ENCODE measurements at regions of chr7 and their contacts with region 1.

Region 1: DNA sequence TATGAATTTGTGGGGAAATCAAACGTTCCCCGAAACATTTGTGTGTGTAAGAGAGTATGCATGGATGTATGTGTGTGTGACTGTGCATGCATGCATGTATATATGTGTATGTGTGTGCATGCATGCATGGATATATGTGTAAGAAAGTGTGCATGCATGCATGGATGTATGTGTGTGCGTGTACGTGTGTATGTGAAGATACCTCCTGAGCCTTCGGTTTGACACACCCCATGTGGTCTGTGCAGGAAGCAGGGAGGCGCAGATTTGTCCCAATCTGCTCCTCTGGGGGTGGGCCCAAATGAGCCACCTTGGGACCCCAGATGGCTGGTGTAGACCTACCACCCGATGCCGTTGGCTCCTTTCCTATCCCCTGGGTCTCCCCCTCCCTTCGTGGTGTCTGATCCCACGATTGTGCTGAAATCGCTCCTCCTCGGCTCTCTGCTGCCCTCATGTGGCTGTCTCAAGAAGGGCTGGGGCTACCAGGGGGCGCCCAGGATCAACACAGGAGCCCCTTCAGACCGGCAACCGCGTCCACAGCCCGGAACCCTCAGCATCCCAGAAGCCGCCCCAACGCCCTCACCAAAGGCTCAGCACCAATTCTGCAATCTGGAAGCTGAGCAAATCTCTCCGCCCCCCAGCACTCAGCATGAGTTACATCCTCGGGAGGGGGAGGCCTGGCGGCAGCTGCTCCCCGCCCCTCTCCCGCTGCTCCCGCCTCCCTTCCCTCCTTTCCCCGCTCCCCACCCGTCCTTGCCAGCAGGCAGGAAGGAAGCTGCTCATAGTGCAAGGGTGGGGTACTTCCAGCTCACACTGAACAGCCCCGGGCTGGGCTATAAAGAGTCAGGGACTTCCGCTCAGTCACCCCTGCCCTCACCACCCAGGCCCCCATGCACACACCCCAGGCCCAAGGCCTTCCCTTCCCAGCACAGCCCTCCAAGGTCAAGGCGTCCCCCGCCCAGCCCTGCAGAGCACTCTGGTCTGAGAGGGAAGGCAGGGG is 2.3 kb upstream of the NOS3 start:
- DNase-seq: peak; percentile 87
- H3K4me3 ChIP-seq: no peak overlapping the region
- H3K27ac ChIP-seq: peak overlapping the region; percentile 52
- H3K4me1 ChIP-seq: peaks cover 26% of the 10 kb centered on the region
- H3K27me3 ChIP-seq: peaks cover 0 to 1% of the 10 kb centered on the region in 2 experiments
- CTCF ChIP-seq: peak; percentile 93 to 96
- POLR2A ChIP-seq: peak; percentile 47

Region 2: GRCh38 chr7:150567169-150567568 is 421.4 kb before region 1 on chr7 and contains the start of gene GIMAP4:
- CTCF ChIA-PET with region 1: no interaction called
- POLR2A ChIA-PET with region 1: no interaction called
- dilution Hi-C with region 1: no loop called
- intact Hi-C with region 1: loop called (anchors 10 kb)
- DNase-seq: peak; percentile 69
- H3K4me3 ChIP-seq: peak within 1 kb of the TSS; percentile 78 to 80 (median 79)
- H3K27ac ChIP-seq: peak within 1 kb of the TSS; percentile 63
- H3K4me1 ChIP-seq: peaks cover 62% of the 10 kb centered on the region
- H3K27me3 ChIP-seq: no peaks in the 10 kb centered on the region
- CTCF ChIP-seq: no peak
- POLR2A ChIP-seq: peak; percentile 49
- total RNA-seq, gene GIMAP4: 168 and 174 TPM in 2 replicates

Region 3: DNA sequence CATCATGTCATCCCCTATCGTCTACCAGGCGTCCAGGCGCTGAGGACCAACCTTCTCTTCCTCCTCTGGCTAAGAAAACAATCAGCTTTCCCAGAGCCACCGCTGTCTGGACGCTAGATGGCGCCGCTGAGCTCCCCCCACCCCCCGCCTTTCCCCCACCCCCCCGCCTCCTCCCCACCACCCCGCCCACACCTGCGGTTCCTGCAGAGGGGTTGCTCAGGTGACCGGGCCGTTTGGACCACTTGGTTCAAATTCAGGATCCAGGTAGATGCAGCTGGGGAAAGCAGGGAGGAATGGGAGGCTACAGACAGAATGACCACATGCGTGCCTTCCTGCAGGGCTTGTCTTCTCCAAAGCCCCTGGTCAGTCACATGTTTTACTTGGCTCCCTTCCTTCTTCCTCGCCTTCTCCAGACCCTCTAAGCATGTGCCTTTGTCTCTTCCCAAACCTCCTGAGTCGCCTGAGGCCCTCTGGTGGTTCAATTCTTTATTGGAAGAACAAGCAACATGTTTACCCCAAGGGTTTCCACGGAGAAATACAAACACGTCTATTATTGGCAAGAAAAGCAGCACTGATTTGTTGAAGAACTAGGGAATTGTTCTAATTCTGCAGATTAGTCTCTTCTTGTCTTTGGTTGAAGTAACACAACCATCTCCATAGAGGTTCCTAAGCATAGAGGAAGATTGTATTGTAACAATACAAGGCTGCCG is 111.6 kb before region 1 on chr7:
- CTCF ChIA-PET with region 1: interaction called, 6 read pairs
- POLR2A ChIA-PET with region 1: no interaction called
- dilution Hi-C with region 1: no loop called
- intact Hi-C with region 1: loop called (anchors 5 kb)
- DNase-seq: peak; percentile 89
- H3K4me3 ChIP-seq: no peak overlapping the region
- H3K27ac ChIP-seq: no peak overlapping the region
- H3K4me1 ChIP-seq: peaks cover 10% of the 10 kb centered on the region
- H3K27me3 ChIP-seq: peaks cover 8 to 50% of the 10 kb centered on the region in 2 experiments
- CTCF ChIP-seq: peak; percentile 46 to 63
- POLR2A ChIP-seq: no peak

Region 4: DNA sequence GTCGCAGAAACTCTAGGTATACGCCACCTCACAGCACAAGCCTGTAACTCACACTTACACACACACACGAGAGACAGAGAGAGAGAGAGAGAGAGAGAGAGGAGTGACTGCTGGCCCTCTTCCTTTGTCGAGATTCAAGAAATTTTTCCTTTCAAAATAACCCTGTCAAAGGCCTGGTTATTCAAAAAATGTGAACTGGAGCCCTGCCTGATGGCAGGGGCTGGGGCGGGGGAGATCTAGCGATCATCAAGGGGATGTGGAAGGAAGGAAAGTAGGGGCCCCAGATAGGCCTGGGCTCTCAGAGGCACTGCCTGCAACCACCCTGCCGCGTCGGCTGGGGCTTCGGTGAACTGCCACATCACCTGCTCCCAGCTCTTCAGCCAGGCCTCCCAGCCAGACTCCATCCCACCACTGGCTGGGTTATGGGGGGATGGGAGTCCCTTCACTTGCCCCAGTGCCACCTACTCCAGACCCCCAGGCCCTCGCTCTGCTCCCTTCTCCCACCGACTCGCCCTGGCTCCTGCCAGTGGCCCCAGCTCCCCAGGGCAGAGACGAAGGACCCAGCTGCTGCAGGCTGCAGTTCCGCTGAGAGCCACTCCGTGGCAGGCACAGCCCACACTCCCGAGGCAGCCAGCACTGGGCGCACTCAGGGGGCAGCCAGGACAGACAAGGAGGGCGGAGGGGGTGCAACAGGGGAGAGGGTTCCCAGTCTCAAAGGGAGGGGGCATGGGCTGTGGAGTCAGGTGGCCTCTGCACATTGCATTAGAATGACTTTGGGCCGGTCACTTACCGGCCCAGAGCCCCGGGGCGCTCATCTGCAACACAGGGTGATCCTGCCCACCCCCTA is 25.8 kb before region 1 on chr7:
- CTCF ChIA-PET with region 1: interaction called, 54 read pairs
- POLR2A ChIA-PET with region 1: no interaction called
- dilution Hi-C with region 1: no loop called
- intact Hi-C with region 1: loop called (anchors 1 kb)
- DNase-seq: peak; percentile 36
- H3K4me3 ChIP-seq: no peak overlapping the region
- H3K27ac ChIP-seq: no peak overlapping the region
- H3K4me1 ChIP-seq: no peaks in the 10 kb centered on the region
- H3K27me3 ChIP-seq: peaks cover 17 to 23% of the 10 kb centered on the region in 2 experiments
- CTCF ChIP-seq: peak; percentile 81 to 96
- POLR2A ChIP-seq: no peak

Region 5: DNA sequence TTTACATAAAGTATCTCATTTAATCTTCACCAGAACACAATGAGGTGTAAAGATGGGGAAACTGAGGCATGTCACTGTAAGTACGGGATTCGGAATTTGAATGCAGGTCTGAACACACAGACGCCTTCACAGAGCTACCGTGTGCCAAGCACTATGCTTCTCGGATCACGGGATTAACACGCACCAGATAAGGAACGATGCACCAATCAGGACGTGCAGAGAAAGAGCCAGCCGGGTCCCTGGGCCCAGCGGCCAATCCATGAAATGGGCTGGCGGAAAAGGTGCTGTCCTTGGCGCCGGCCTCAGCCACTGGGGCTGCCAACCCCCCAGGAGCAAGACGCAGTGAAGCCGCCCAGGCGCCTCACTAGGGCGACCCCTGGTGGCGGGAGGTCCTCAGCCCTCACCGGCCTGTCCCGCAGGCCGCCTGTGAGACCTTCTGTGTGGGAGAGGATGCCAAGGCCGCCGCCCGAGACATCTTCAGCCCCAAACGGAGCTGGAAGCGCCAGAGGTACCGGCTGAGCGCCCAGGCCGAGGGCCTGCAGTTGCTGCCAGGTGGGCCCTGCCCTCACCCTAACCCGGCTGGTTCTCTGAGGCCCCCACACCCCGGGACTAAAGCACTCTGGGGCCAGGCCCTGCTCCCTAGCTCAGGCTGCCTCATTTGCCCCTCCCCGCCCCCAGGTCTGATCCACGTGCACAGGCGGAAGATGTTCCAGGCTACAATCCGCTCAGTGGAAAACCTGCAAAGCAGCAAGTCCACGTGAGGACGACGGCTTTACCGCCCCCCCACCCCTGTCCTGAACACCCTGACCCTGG is 20.2 kb after region 1 on chr7:
- CTCF ChIA-PET with region 1: interaction called, 68 read pairs
- POLR2A ChIA-PET with region 1: interaction called, 3 read pairs
- dilution Hi-C with region 1: no loop called
- intact Hi-C with region 1: loop called (anchors 1 kb)
- DNase-seq: peak; percentile 62
- H3K4me3 ChIP-seq: no peak overlapping the region
- H3K27ac ChIP-seq: peak overlapping the region; percentile 23
- H3K4me1 ChIP-seq: peaks cover 44% of the 10 kb centered on the region
- H3K27me3 ChIP-seq: no peaks in the 10 kb centered on the region
- CTCF ChIP-seq: peak; percentile 96 to 98
- POLR2A ChIP-seq: peak; percentile 49

Region 6: DNA sequence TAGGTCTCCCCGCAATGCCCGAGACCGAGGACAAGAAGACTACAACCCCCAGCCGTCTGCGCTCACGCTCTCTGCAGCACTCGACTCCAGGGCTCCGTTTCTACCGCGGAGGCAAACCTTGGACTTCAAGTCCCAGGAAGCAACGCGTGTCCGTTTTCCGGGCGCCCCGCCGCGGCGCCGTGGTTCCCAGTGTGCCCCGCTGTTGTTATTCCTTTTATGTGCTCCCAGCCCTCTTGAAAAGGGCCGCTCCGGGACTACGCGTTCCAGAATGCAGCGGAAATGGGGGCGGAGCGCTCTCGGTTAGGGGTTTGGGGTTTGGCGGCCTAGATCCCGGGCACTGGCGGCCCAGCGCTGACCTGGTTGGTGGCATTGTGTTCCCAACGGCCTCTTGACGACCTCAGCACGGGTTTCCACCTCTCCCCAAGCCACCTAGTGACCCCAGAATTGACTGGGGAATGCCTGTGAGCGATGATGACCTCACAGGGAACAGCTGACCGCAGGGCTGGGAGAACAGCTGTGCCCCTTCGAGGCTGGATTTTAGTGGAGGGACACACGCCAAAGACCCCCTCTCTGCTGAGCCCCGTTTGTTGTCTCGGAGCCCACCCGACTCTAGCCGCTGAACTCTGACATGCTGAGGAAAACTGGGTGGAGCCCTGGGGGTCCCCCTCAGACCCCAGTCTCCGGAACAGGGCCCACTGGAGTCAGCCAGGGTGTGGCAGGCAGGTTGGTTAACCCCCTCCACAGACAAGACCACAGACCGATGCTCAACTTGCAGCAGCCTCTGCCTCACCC is 69.7 kb after region 1 on chr7:
- CTCF ChIA-PET with region 1: no interaction called
- POLR2A ChIA-PET with region 1: no interaction called
- dilution Hi-C with region 1: no loop called
- intact Hi-C with region 1: loop called (anchors 2 kb)
- DNase-seq: peak; percentile 100
- H3K4me3 ChIP-seq: peak overlapping the region in 2 of 3 experiments; percentile 11 to 69
- H3K27ac ChIP-seq: peak overlapping the region; percentile 81
- H3K4me1 ChIP-seq: peaks cover 29% of the 10 kb centered on the region
- H3K27me3 ChIP-seq: no peaks in the 10 kb centered on the region
- CTCF ChIP-seq: no peak
- POLR2A ChIP-seq: peak; percentile 52

Region 7: DNA sequence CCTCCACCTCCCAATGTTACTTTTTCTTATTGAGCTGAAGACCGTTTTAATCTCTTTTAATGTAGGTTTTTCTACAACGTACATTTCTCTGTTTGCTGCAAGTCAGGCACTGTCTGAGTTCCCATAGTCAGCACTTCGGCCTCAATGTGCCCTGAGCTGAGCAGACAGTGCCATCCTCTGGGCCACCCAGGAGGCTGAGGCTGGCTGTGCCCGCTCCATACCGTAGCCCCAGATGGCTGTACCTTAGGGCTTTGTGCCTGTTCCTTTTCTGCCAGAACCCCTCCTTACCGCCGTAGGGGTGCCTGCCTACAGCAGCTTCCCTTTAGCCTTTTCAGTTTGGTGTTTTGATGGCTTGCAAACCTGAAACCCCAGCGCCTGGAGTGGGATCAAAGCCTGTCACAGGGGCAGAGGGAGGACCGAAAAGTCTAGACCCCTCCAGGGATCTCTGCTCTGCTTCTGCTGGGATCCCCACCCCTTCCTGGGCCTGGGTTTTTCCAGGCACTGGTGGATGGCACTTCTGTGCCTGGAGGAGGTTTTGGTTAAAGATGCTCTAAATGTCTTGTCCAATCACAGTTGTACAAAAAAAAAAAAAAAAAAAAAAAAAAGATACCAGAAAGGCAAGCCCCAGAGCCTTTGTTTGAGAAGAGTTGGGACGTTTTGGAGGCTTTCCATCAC is 106.7 kb after region 1 on chr7:
- CTCF ChIA-PET with region 1: no interaction called
- POLR2A ChIA-PET with region 1: no interaction called
- dilution Hi-C with region 1: no loop called
- intact Hi-C with region 1: no loop called
- DNase-seq: no peak
- H3K4me3 ChIP-seq: no peak overlapping the region
- H3K27ac ChIP-seq: no peak overlapping the region
- H3K4me1 ChIP-seq: peaks cover 21% of the 10 kb centered on the region
- H3K27me3 ChIP-seq: no peaks in the 10 kb centered on the region
- CTCF ChIP-seq: no peak
- POLR2A ChIP-seq: no peak

Region 8: DNA sequence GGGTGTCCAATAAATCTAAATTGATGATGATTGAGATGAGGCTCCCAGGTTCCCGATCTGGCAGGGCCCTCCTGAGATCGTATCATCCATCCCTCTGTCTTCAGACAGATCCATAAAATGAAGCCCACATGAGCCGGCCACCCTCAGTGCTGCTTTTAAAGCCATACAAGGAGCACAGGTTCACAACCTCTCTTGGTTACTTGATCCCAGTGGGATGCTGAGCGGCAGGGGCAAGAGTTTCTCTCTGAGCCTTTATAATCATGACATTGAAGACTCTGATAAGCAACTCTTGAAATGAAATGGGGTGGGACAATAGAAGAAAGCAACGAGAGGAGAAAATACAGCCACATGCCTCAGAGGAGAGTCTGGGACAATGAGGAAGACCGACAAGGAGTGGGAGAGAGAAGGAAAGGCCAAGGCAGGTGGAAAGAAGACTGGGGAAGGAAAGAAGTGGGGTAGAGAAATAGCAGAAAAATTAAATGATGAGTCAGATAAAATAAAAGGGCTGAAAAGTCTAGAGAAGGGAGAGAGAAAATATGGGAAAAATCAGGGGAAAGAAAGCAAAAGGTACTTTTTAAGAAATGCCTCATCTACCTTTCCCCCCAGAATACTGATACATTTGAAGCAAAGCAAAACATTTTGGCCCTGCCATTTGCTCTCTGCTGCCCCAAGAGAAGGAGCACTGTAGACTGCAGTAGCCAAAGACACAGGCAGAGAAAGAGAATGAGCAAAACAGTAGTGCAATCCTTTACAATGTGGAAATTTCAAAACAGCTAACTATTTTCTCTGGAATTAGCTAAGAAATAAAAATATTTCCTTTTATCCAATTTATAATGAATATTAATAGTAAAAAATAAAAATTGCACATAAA is 164.3 kb after region 1 on chr7:
- CTCF ChIA-PET with region 1: no interaction called
- POLR2A ChIA-PET with region 1: no interaction called
- dilution Hi-C with region 1: no loop called
- intact Hi-C with region 1: no loop called
- DNase-seq: no peak
- H3K4me3 ChIP-seq: no peak overlapping the region
- H3K27ac ChIP-seq: no peak overlapping the region
- H3K4me1 ChIP-seq: peaks cover 4% of the 10 kb centered on the region
- H3K27me3 ChIP-seq: peaks cover 20 to 56% of the 10 kb centered on the region in 2 experiments
- CTCF ChIP-seq: peak in 1 of 2 donors; percentile 15
- POLR2A ChIP-seq: no peak